ENCODE measurements at regions of chr17 and their contacts with region 1.

Region 1: DNA sequence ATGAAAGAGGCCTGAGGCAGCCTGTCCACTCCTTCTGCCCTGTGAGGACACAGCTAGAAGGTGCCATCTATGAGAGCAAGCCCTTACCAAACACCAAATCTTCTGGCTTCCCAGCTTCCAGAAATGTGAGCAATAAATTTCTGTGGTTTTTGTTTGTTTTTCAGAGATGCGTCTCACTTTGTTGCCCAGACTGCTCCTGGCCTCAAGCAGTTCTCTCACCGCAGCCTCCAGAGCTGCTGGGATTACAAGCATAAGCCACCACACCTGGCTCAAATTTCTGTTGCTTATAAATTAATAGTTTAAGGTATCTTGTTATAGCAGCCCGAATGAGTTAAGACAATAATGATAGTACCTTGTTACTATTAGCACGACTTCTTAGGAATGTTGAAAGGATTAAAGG is 12.5 kb upstream of the SLC16A11 start:
- DNase-seq: no peak
- ATAC-seq: no peak
- H3K4me3 ChIP-seq: no peak overlapping the region
- H3K27ac ChIP-seq: no peak overlapping the region
- H3K4me1 ChIP-seq: no peaks in the 10 kb centered on the region
- H3K27me3 ChIP-seq: no peaks in the 10 kb centered on the region
- CTCF ChIP-seq: no peak

Region 2: GRCh38 chr17:6812295-6812694 is 244.1 kb before region 1 on chr17:
- intact Hi-C with region 1: no loop called
- DNase-seq: no peak
- ATAC-seq: no peak
- H3K4me3 ChIP-seq: no peak overlapping the region
- H3K27ac ChIP-seq: no peak overlapping the region
- H3K4me1 ChIP-seq: no peaks in the 10 kb centered on the region
- H3K27me3 ChIP-seq: no peaks in the 10 kb centered on the region
- CTCF ChIP-seq: no peak

Region 3: GRCh38 chr17:7177196-7177953 is 121.0 kb after region 1 on chr17:
- intact Hi-C with region 1: loop called in 1 of 3 experiments (anchors 10 kb)
- DNase-seq: peak in 5 of 6 donors; percentile 56 to 80 (median 64)
- ATAC-seq: peak; percentile 84 to 94 (median 90)
- H3K4me3 ChIP-seq: peak overlapping the region in 2 of 4 donors; percentile 30 to 35
- H3K27ac ChIP-seq: no peak overlapping the region
- H3K4me1 ChIP-seq: peaks cover 0 to 5% (median 0%) of the 10 kb centered on the region in 3 donors
- H3K27me3 ChIP-seq: no peaks in the 10 kb centered on the region
- CTCF ChIP-seq: peak; percentile 65 to 76 (median 67)

Measured in pancreas (tissue), 10 donors.